AG04449 (cell line): ENCODE measurements at regions of chr7 and their contacts with region 1.

Region 1: GRCh38 chr7:47266131-47266706 is 315.7 kb downstream of the TNS3 start:
- DNase-seq: no peak
- H3K4me3 ChIP-seq: no peak overlapping the region
- CTCF ChIP-seq: peak; percentile 82

Region 2: GRCh38 chr7:47291461-47292081 is 25.4 kb after region 1 on chr7:
- CTCF ChIA-PET with region 1: interaction called, 19 read pairs
- POLR2A ChIA-PET with region 1: no interaction called
- DNase-seq: peak; percentile 87
- H3K4me3 ChIP-seq: no peak overlapping the region
- CTCF ChIP-seq: no peak

Region 3: GRCh38 chr7:47337531-47337930 is 71.3 kb after region 1 on chr7:
- CTCF ChIA-PET with region 1: interaction called, 12 read pairs
- POLR2A ChIA-PET with region 1: no interaction called
- DNase-seq: no peak
- H3K4me3 ChIP-seq: no peak overlapping the region
- CTCF ChIP-seq: no peak

Region 4: DNA sequence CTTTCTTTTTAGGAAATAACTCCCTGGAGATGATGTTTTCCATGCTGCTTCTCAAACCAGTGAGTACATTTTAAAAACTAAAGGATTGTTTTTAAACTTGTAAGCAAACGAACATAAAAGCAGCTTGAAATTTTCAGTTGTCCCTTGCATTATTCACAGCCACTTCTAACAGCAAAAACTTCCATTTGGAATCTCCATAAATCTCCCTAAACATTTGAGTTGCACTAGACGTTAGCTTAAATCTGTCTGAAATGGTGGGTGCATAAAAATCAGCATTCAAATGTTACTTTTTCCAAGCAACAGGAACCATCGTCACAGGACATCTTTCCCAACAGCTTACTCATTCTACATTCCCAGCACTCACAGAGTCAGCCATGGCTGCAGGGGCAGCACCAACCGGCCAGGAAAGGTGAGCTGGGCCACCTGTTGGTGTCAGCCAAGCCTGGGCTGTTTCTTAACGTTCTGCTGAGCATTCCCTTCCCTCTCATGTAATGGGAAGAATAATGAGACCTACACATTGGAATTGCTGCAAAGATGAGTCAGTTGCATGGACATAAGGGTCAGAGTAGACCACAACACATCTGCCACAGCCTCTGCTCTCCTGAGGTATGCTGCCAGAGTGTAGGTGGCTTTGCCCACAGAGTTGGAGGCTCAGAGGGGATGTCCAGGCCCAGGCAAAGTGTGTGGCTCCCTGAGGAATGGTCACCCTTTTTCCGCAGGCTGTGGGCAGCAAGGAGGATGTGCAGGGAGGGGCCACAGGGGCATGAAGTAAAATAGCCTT is 152.6 kb after region 1 on chr7:
- CTCF ChIA-PET with region 1: interaction called, 18 read pairs
- POLR2A ChIA-PET with region 1: no interaction called
- DNase-seq: no peak
- H3K4me3 ChIP-seq: no peak overlapping the region
- CTCF ChIP-seq: no peak

Region 5: GRCh38 chr7:47444379-47445057 is 178.3 kb after region 1 on chr7:
- CTCF ChIA-PET with region 1: interaction called, 10 read pairs
- POLR2A ChIA-PET with region 1: no interaction called
- DNase-seq: no peak
- H3K4me3 ChIP-seq: no peak overlapping the region
- CTCF ChIP-seq: peak; percentile 47

Region 6: DNA sequence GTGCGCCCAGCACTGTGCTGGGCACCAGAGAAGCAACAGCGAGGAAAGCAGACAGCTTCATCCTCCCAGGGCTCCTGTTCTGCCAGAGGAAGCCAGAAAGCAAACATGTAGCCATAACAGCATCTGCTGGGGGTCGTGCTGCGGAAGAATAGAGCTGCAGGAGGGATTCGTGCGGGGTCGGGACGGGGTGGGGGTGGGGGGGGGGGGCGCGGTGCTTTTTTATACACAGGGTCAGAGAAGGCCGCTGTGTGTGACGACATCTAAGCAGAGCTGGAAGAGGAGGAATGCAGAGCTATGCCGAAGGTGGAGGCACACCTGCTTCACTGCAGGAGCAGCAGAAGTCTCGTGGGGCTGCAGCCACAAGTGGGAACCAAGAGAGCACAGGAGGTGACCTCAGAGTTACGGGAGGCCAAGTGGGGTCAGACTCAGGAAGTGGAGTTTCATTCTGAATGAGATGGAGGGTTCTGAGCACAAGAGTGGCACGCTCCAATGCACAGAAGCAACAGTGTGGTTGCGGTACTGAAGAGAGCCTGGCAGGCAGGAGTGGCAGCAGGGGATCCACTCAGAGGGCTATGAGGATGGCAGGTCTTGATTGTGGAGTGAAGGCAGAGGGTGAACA is 671.0 kb after region 1 on chr7:
- CTCF ChIA-PET with region 1: interaction called, 35 read pairs
- POLR2A ChIA-PET with region 1: no interaction called
- DNase-seq: no peak
- H3K4me3 ChIP-seq: no peak overlapping the region
- CTCF ChIP-seq: no peak